A549 (cell line): ENCODE measurements at regions of chr22 and their contacts with region 1.

Region 1: DNA sequence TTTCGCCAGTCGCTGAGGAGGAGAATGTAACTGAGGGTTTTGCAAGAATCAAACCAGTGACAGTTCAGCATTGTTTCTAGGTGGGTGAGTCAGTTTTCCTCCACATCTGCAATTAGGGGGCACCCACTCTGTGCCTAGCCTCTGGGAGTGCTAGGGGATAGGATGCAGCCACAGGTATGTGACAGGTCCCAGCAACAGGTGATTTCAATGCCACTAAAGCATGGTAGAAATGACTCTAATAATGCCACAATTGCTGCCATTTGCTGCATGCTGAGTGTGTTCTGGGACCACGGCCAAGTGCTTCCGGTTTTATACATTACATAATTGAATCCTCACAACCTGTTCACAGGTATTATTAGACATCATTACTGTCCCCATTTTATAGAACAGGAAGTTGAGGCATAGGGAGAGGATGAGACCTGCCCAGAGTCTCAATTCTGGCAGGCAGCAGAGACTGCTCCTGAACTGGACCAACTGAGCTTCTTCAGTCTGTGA is 556 bp downstream of the CRYBB2 start:
- DNase-seq: no peak
- ATAC-seq: no peak
- H3K4me3 ChIP-seq: no peak overlapping the region
- H3K27ac ChIP-seq: no peak overlapping the region
- H3K4me1 ChIP-seq: no peaks in the 10 kb centered on the region
- CTCF ChIP-seq: no peak
- EP300 ChIP-seq: no peak
- POLR2A ChIP-seq: no peak
- RAD21 ChIP-seq: no peak

Region 2: DNA sequence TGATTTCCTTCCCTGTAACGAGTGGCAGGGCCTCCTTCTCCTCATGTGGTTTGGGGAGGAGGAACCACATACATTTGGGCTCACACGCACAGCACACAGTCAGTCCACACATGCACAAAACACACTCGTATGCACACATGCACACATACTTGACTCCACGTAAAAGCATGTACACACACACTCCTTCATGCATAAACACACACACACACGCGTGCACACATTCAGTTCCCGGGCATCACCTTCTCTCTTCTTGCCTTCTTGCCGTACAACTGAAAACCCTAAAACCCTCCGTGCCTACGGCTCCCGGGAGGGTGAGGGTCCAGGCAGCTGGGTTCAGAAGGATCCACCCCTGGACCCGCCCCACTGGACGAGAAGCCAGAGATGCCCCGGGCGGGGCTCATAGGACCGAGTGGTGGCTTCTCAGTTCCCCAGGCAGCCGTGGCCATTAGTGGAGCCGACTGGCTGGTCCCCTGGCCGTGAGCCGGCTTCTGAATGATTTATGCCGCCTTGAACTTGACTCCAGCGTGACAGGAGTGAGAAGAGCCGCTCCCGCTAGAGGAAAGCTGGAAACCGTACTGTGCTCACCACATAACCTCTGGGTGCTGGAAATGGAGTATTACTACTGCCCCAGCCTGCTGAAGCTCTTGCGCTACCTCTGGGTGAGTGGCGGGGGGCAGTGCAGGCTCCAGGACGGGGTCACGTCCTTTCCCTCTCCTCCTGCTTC is 150.1 kb before region 1 on chr22:
- CTCF ChIA-PET with region 1: no interaction called
- POLR2A ChIA-PET with region 1: no interaction called
- DNase-seq: no peak
- ATAC-seq: no peak
- H3K4me3 ChIP-seq: no peak overlapping the region
- H3K27ac ChIP-seq: no peak overlapping the region
- H3K4me1 ChIP-seq: no peaks in the 10 kb centered on the region
- CTCF ChIP-seq: no peak
- EP300 ChIP-seq: no peak
- POLR2A ChIP-seq: no peak
- RAD21 ChIP-seq: no peak

Region 3: GRCh38 chr22:25202290-25202921 is 17.6 kb before region 1 on chr22:
- CTCF ChIA-PET with region 1: interaction called, 15 read pairs
- POLR2A ChIA-PET with region 1: no interaction called
- DNase-seq: peak; percentile 57 to 69
- ATAC-seq: peak; percentile 78 to 91
- H3K4me3 ChIP-seq: no peak overlapping the region
- H3K27ac ChIP-seq: no peak overlapping the region
- H3K4me1 ChIP-seq: no peaks in the 10 kb centered on the region
- CTCF ChIP-seq: peak; percentile 59
- EP300 ChIP-seq: no peak
- POLR2A ChIP-seq: no peak
- RAD21 ChIP-seq: peak; percentile 63 to 73

Region 4: GRCh38 chr22:25235547-25236290 is 15.7 kb after region 1 on chr22:
- CTCF ChIA-PET with region 1: interaction called, 4 read pairs
- POLR2A ChIA-PET with region 1: interaction called, 10 read pairs
- DNase-seq: peak; percentile 86 to 91
- ATAC-seq: peak; percentile 98 to 99
- H3K4me3 ChIP-seq: peak overlapping the region; percentile 24; the same call in 2 of the 3 replicates
- H3K27ac ChIP-seq: peak overlapping the region in 1 of 2 experiments; percentile 48; a peak in 2 of 6 replicates
- H3K4me1 ChIP-seq: no peaks in the 10 kb centered on the region
- CTCF ChIP-seq: peak; percentile 61
- EP300 ChIP-seq: no peak
- POLR2A ChIP-seq: no peak
- RAD21 ChIP-seq: peak; percentile 85 to 87